ENCODE measurements at regions of chr4 and their contacts with region 1.

Region 1: GRCh38 chr4:112231779-112232713 is at the start of gene AP1AR:
- DNase-seq: peak; percentile 66 to 96 (median 80)

Region 2: DNA sequence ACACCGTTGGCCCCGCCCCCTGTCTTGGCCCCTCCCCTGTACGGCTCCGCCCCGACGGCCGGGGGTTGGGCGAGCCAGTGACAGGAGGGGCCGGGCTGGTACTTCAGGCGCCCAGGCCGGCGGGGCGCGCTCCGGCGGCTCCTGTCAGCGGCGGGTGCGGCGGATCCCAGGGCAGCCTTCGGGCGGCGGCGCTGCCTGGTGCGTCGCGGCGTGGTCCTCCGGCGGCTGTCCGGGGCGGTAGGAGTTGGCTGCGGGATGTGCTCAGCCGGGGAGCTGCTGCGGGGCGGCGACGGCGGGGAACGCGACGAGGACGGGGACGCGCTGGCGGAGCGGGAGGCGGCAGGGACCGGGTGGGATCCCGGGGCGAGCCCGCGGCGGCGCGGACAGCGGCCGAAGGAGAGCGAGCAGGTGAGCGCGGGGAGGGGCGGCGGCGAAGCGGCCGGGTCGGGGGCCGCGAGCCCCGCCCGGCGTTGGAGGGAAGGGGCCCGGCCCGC is 86.7 kb before region 1 on chr4 and contains the start of gene FAM241A:
- intact Hi-C with region 1: loop called (anchors 2 kb)
- DNase-seq: peak; percentile 71 to 98 (median 84)